GM23248 (cell line): ENCODE measurements at regions of chr1 and their contacts with region 1.

Region 1: GRCh38 chr1:110328274-110328673 is 10.9 kb upstream of the RBM15 start:
- DNase-seq: no peak
- H3K4me3 ChIP-seq: no peak overlapping the region
- H3K27ac ChIP-seq: no peak overlapping the region
- H3K4me1 ChIP-seq: no peaks in the 10 kb centered on the region
- H3K27me3 ChIP-seq: no peaks in the 10 kb centered on the region

Region 2: GRCh38 chr1:110460253-110461220 is 132.3 kb after region 1 on chr1:
- in situ Hi-C with region 1: loop called (anchors 5 kb)
- DNase-seq: peak; percentile 86
- H3K4me3 ChIP-seq: no peak overlapping the region
- H3K27ac ChIP-seq: no peak overlapping the region
- H3K4me1 ChIP-seq: peaks cover 16% of the 10 kb centered on the region
- H3K27me3 ChIP-seq: no peaks in the 10 kb centered on the region; the same call in 1 of the 2 replicates